Brain microvascular endothelial cell (primary cell): ENCODE measurements at regions of chr13 and their contacts with region 1.

Region 1: GRCh38 chr13:48769107-48769704 is 115.5 kb downstream of the CYSLTR2 start:
- DNase-seq: peak; percentile 95
- H3K4me3 ChIP-seq: no peak overlapping the region
- H3K27ac ChIP-seq: no peak overlapping the region
- H3K27me3 ChIP-seq: no peaks in the 10 kb centered on the region
- CTCF ChIP-seq: peak; percentile 99

Region 2: GRCh38 chr13:48595431-48596429 is 173.5 kb before region 1 on chr13:
- in situ Hi-C with region 1: loop called (anchors 10 kb)
- DNase-seq: peak; percentile 76
- H3K4me3 ChIP-seq: no peak overlapping the region
- H3K27ac ChIP-seq: no peak overlapping the region
- H3K27me3 ChIP-seq: no peaks in the 10 kb centered on the region
- CTCF ChIP-seq: peak; percentile 86

Region 3: GRCh38 chr13:48679911-48680680 is 89.1 kb before region 1 on chr13:
- in situ Hi-C with region 1: no loop called
- DNase-seq: no peak
- H3K4me3 ChIP-seq: no peak overlapping the region
- H3K27ac ChIP-seq: no peak overlapping the region
- H3K27me3 ChIP-seq: no peaks in the 10 kb centered on the region
- CTCF ChIP-seq: no peak